ENCODE measurements at regions of chrX and their contacts with region 1.

Region 1: DNA sequence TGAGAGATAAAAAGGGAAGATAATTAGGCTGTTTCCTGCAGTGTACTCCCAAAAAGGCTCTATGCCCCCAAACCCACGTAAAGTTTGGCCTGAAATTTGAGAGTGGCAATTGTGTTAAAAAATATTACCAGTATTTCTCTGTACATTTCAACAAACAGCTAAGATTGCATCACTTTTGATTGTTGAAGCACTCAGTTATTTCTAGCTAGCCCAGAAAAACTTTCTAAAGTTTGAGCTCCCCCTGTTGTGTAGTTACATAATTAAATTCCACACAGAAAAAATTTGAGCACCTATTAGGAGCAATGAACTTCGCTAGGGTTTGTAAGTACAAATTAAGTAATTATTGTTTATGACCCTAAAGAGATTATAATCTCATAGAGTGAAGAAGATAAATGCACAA is 109.4 kb downstream of the DLG3 start:
- DNase-seq: no peak
- H3K4me3 Mint-ChIP-seq: no peak overlapping the region
- H3K27ac Mint-ChIP-seq: peak overlapping the region; percentile 85
- H3K4me1 Mint-ChIP-seq: peaks cover 16% of the 10 kb centered on the region
- H3K27me3 Mint-ChIP-seq: no peaks in the 10 kb centered on the region
- CTCF ChIP-seq: peak; percentile 18

Region 2: GRCh38 chrX:70422851-70423341 is 131.2 kb before region 1 on chrX and contains the start of gene GDPD2:
- CTCF ChIA-PET with region 1: interaction called, 17 read pairs
- intact Hi-C with region 1: loop called (anchors 2 kb)
- DNase-seq: peak; percentile 60
- H3K4me3 Mint-ChIP-seq: peak within 1 kb of the TSS; percentile 41
- H3K27ac Mint-ChIP-seq: no peak within 1 kb of the TSS
- H3K4me1 Mint-ChIP-seq: peaks cover 5% of the 10 kb centered on the region
- H3K27me3 Mint-ChIP-seq: no peaks in the 10 kb centered on the region
- CTCF ChIP-seq: peak; percentile 33
- total RNA-seq, gene GDPD2: not detected in 2 replicates

Region 3: DNA sequence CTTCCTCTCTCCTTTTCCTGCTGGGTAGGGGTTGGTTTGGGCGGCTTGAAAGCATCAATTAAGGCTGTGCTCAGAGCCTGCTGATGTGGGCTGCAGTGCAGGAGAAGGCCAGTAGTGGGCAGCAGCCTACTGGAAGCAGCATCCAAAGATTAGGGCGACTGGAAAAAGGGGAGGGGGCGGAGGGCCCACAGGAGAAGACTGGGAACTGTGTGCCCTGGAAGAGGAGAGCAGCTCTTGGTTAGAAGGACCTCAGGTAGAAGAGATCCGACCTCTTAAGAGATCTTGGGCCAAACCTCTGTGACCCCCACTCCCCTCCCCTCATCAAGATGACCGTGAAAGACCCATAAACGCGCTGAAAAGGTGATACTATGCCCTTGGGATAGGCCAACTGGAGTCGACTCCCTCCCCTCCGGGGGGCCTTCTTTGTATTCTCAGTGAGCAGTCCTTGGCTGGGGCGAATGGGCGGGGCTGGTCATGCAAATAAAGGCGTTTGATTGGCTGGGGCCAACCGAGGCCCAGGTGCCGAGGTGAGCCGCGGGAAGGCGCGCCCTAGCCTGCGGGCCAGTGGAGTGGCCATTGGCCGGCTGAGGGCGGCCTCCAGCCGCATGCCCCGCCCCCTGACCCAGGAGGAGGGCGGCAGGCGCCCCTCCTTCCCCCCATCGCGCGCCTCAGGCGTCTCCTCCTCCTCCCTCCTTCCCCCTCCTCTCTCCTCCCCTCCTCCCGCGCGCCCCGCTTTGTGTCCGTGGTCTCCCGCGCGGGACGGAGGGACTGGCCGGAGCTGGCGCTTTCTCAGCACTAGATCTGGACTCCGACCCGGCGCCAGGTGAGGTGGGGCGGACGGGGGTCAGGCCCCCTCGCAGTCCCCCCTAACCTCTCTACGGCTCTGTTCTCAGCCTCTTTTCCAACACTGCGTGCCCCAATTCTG is 99.4 kb before region 1 on chrX:
- CTCF ChIA-PET with region 1: interaction called, 14 read pairs
- intact Hi-C with region 1: loop called (anchors 1 kb)
- DNase-seq: peak; percentile 93
- H3K4me3 Mint-ChIP-seq: peak overlapping the region; percentile 99
- H3K27ac Mint-ChIP-seq: peak overlapping the region; percentile 97
- H3K4me1 Mint-ChIP-seq: peaks cover 27% of the 10 kb centered on the region
- H3K27me3 Mint-ChIP-seq: no peaks in the 10 kb centered on the region
- CTCF ChIP-seq: peak; percentile 89

Region 4: GRCh38 chrX:70476934-70477733 is 76.9 kb before region 1 on chrX:
- CTCF ChIA-PET with region 1: interaction called, 11 read pairs
- intact Hi-C with region 1: loop called (anchors 5 kb)
- DNase-seq: peak; percentile 83
- H3K4me3 Mint-ChIP-seq: peak overlapping the region; percentile 56
- H3K27ac Mint-ChIP-seq: peak overlapping the region; percentile 96
- H3K4me1 Mint-ChIP-seq: peaks cover 66% of the 10 kb centered on the region
- H3K27me3 Mint-ChIP-seq: no peaks in the 10 kb centered on the region
- CTCF ChIP-seq: no peak

Region 5: GRCh38 chrX:70675284-70675683 is 121.2 kb after region 1 on chrX:
- CTCF ChIA-PET with region 1: no interaction called
- intact Hi-C with region 1: no loop called
- DNase-seq: no peak
- H3K4me3 Mint-ChIP-seq: no peak overlapping the region
- H3K27ac Mint-ChIP-seq: no peak overlapping the region
- H3K4me1 Mint-ChIP-seq: no peaks in the 10 kb centered on the region
- H3K27me3 Mint-ChIP-seq: no peaks in the 10 kb centered on the region
- CTCF ChIP-seq: no peak

Measured in Calu3 (cell line).